Caco-2 (cell line): ENCODE measurements at regions of chr1 and their contacts with region 1.

Region 1: DNA sequence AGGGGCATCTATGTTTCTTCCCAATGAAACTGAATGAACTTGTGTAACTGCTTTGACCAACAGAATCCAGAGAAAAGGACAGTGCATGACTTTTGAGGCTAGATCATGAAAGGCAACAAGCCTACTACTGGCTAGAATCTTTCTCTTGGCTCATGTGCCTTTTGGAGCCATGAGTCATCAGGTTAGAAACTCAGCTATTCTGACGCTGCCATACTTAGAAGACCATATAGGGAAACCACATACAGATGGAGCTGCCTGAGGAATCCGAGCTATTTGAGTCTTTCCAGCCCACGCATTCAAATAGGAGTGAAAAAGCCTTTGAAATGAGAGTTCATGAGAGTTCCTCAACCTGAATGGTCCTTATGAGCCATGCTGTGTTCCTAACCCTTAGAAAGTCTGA is 738.5 kb upstream of the CHRM3 start:
- DNase-seq: peak; percentile 59 to 65
- H3K4me3 ChIP-seq: no peak overlapping the region
- H3K4me3 Mint-ChIP-seq: no peak overlapping the region
- H3K27ac Mint-ChIP-seq: no peak overlapping the region
- H3K4me1 ChIP-seq: peaks cover 13% of the 10 kb centered on the region
- H3K4me1 Mint-ChIP-seq: no peaks in the 10 kb centered on the region
- H3K27me3 ChIP-seq: no peaks in the 10 kb centered on the region
- H3K27me3 Mint-ChIP-seq: no peaks in the 10 kb centered on the region
- CTCF ChIP-seq: no peak

Region 2: GRCh38 chr1:238658763-238659162 is 10.9 kb after region 1 on chr1:
- CTCF ChIA-PET with region 1: no interaction called
- POLR2A ChIA-PET with region 1: no interaction called
- intact Hi-C with region 1: loop called (anchors 1 kb)
- DNase-seq: no peak
- H3K4me3 ChIP-seq: no peak overlapping the region
- H3K4me3 Mint-ChIP-seq: no peak overlapping the region
- H3K27ac Mint-ChIP-seq: peak overlapping the region; percentile 50
- H3K4me1 ChIP-seq: peaks cover 13% of the 10 kb centered on the region
- H3K4me1 Mint-ChIP-seq: peaks cover 7% of the 10 kb centered on the region
- H3K27me3 ChIP-seq: no peaks in the 10 kb centered on the region
- H3K27me3 Mint-ChIP-seq: no peaks in the 10 kb centered on the region
- CTCF ChIP-seq: no peak